Ascending aorta (tissue), 2 donors: ENCODE measurements at regions of chr5 and their contacts with region 1.

Region 1: GRCh38 chr5:139293504-139294373 is at the start of gene MATR3:
- DNase-seq: peak; percentile 78 to 97
- H3K4me3 ChIP-seq: peak within 1 kb of the TSS; percentile 88 to 89
- H3K27ac ChIP-seq: peak within 1 kb of the TSS; percentile 100
- H3K4me1 ChIP-seq: peaks cover 12 to 30% of the 10 kb centered on the region in 2 donors
- H3K27me3 ChIP-seq: no peaks in the 10 kb centered on the region
- CTCF ChIP-seq: no peak
- total RNA-seq, gene MATR3: 58.8 TPM

Region 2: GRCh38 chr5:139210585-139210984 is 83.2 kb before region 1 on chr5:
- intact Hi-C with region 1: no loop called
- DNase-seq: no peak
- H3K4me3 ChIP-seq: no peak overlapping the region
- H3K27ac ChIP-seq: no peak overlapping the region
- H3K4me1 ChIP-seq: no peaks in the 10 kb centered on the region
- H3K27me3 ChIP-seq: no peaks in the 10 kb centered on the region
- CTCF ChIP-seq: no peak

Region 3: DNA sequence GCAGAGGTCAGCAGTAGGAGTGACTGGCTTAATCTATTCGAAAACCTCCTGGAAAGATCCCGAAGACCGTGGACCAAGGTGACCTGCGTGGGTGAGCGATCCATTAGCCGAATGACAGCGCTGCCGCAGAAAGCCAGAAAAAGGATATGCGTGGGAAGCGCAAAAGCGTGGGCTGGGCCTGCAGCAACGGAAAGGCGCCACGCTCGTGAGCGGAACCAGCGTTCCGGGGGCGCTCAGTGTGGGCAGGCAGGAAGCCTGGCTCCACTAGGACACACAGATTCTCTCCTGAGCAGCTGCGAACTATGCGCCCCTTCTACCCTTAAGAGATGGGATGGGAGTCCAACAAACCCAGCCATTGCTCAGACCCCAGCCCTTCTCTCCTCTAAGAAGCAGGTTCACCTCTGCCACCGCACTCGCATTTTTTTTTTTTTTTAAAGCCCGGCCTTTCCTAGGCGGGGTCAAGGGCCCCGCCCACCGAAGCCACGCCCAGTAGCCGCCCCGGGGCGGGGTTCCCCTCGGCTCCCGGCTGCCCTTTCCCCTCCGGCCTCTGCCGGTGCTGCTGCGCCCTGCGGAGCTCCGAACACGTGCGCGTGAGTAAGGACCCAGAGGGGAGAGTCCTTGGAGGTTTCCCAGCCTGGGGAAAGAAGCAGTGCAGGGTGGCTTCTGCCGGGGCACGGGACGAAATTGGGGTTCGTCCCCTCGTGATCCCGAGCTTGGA is 20.0 kb before region 1 on chr5:
- intact Hi-C with region 1: loop called (anchors 1 kb)
- DNase-seq: peak; percentile 55 to 93
- H3K4me3 ChIP-seq: peak overlapping the region; percentile 44 to 71
- H3K27ac ChIP-seq: peak overlapping the region; percentile 47 to 48
- H3K4me1 ChIP-seq: peaks cover 0 to 21% of the 10 kb centered on the region in 2 donors
- H3K27me3 ChIP-seq: no peaks in the 10 kb centered on the region
- CTCF ChIP-seq: peak in 2 of 3 experiments; percentile 18 to 31

Region 4: DNA sequence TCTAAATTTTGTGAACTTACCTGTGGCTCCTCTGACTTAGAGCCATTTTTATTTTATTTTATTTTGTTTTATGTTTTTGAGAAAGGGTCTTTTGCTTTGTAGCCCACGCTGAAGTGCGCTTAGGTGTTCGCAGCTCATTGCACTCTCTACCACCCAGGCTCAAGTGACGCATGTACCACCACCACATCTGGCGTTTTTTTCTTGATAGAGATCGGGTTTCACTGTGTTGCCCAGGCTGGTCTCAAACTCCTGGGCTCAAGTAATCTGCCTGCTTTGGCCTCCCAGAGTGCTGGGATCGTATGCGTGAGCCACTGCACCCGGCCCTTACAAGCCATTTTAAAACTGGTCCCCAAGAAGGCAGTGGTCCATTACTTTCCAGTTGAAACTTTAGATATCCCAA is 18.3 kb after region 1 on chr5:
- intact Hi-C with region 1: no loop called
- DNase-seq: no peak
- H3K4me3 ChIP-seq: no peak overlapping the region
- H3K27ac ChIP-seq: no peak overlapping the region
- H3K4me1 ChIP-seq: peaks cover 2 to 37% of the 10 kb centered on the region in 2 donors
- H3K27me3 ChIP-seq: no peaks in the 10 kb centered on the region
- CTCF ChIP-seq: no peak

Region 5: GRCh38 chr5:139341650-139342422 is 48.1 kb after region 1 on chr5 and contains the start of gene PAIP2:
- intact Hi-C with region 1: loop called (anchors 1 kb)
- DNase-seq: peak; percentile 88 to 99
- H3K4me3 ChIP-seq: peak within 1 kb of the TSS; percentile 71 to 97
- H3K27ac ChIP-seq: peak within 1 kb of the TSS; percentile 90 to 99
- H3K4me1 ChIP-seq: peaks cover 5 to 19% of the 10 kb centered on the region in 2 donors
- H3K27me3 ChIP-seq: no peaks in the 10 kb centered on the region
- CTCF ChIP-seq: peak; percentile 78 to 85 (median 84)
- total RNA-seq, gene PAIP2: 27.6 TPM

Region 6: DNA sequence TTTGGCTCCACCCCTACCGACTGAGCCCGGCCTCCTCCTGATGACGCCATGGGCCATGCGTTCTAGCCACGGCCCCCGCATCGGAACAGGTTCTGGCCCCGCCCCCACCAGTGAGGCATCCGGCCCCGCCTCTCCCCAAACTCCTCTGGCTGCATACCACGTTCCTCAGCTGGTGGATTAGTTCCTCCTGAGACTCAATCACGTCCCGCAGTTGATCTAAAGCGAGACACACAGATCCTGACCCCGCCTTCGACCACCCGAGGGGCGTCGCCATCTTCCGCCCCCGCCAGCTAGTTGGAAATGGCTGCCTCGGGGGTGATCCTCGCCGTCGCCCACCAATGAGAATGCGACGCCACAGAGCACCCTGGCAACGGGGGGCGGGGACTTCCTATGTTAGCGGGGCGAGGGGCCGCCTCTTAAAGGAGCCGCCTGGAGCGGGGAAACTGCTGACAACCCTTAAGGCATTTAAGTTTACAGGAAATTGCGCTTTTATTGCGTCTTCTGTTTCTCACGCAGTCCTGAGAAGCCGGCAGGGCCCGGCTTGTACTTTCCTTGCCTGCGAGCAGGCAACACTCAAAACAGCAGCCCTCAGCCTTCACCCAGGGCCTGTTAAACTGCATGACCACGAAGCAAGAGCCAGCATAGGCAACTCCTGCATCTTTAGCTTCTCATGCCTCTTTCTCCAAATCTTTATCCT is 110.2 kb after region 1 on chr5 and contains the start of gene SPATA24:
- intact Hi-C with region 1: loop called (anchors 5 kb)
- DNase-seq: peak; percentile 94 to 99
- H3K4me3 ChIP-seq: peak within 1 kb of the TSS; percentile 61 to 62
- H3K27ac ChIP-seq: peak within 1 kb of the TSS; percentile 88 to 90
- H3K4me1 ChIP-seq: peaks cover 0 to 10% of the 10 kb centered on the region in 2 donors
- H3K27me3 ChIP-seq: no peaks in the 10 kb centered on the region
- CTCF ChIP-seq: no peak
- total RNA-seq, gene SPATA24: not detected

Region 7: DNA sequence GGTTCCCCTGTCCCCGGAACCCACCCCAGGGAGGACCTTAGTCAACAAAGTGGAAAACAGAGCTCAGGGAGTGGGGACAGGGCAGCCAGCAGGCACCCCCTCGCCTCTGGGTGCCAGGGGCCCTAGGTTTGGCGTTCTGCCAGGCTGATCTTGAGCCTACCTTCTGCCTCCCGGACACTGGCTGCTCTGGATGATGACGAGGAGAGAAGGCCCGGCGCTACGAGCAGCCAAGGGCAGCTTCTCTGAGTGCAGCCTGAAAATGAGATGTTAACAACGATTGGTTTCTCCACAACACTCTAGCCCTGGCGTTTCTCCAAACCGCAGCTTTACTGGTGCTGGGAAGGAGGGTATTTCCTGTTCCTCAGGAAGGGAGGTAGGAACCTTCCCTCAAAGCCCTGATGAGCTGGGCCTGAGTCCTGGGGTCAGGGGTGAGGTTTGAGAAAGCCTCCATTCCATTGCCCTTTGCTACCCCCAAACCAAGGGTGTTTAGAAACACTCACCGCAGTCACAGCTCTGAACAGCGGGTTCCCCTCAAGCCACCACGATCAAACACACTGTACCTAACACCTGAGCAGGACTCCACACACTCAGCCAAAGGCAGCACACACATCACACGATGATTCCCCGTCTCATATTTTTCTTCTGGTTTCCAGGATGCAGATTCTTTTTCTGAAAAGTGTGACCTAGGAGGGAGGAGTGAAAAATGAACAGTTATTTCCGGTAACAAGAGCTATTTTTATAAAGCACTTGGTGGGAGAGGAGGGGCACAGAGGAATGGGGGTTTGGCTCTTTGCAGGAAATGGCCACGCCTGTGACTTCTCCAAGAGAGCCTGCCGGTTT is 188.5 kb after region 1 on chr5 and contains the start of gene STING1:
- intact Hi-C with region 1: loop called (anchors 5 kb)
- DNase-seq: peak; percentile 53 to 93
- H3K4me3 ChIP-seq: peak within 1 kb of the TSS; percentile 64 to 74
- H3K27ac ChIP-seq: peak within 1 kb of the TSS; percentile 96 to 98
- H3K4me1 ChIP-seq: peaks cover 4 to 27% of the 10 kb centered on the region in 2 donors
- H3K27me3 ChIP-seq: no peaks in the 10 kb centered on the region
- CTCF ChIP-seq: no peak
- total RNA-seq, gene STING1: 179 TPM

Region 8: DNA sequence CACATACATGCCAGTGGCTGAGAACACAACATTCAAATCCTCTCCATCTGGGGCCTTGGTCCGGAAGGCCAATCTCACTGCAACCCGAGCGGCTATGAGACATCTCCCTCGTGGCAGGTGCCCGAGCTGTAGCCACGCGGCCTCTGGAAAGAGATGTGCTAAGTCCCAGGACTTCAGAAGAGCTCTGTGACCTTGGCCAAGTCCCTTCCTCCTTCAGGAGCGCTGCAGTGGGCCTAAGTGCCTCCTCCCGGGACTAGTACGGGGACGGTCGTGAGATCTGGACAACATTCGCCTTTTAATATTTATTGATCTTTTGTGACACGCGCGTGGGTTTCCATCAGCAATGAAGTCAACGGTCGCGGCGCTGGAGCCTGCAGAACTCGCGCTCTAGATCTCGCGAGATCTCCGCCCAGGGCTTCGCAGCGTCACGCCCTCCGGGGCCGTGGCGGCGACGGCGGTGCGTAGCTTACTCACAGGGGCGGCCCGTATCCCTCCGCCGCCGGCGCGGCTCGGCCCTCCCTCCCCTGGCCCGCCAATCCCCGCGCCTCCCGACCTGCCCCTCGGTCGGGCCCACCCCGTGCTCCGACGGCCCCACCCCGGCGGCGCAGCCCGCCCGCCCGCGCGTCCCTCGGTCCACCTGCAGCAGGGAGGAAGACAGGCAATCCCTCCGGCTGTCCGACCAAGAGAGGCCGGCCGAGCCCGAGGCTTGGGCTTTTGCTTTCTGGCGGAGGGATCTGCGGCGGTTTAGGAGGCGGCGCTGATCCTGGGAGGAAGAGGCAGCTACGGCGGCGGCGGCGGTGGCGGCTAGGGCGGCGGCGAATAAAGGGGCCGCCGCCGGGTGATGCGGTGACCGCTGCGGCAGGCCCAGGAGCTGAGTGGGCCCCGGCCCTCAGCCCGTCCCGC is 267.3 kb after region 1 on chr5 and contains the start of gene UBE2D2:
- intact Hi-C with region 1: loop called (anchors 10 kb)
- DNase-seq: peak; percentile 78 to 98
- H3K4me3 ChIP-seq: peak within 1 kb of the TSS; percentile 86 to 91
- H3K27ac ChIP-seq: peak within 1 kb of the TSS; percentile 96 to 99
- H3K4me1 ChIP-seq: peaks cover 14 to 38% of the 10 kb centered on the region in 2 donors
- H3K27me3 ChIP-seq: no peaks in the 10 kb centered on the region
- CTCF ChIP-seq: no peak
- total RNA-seq, gene UBE2D2: 65.9 TPM